ENCODE measurements at regions of chr20 and their contacts with region 1.

Region 1: DNA sequence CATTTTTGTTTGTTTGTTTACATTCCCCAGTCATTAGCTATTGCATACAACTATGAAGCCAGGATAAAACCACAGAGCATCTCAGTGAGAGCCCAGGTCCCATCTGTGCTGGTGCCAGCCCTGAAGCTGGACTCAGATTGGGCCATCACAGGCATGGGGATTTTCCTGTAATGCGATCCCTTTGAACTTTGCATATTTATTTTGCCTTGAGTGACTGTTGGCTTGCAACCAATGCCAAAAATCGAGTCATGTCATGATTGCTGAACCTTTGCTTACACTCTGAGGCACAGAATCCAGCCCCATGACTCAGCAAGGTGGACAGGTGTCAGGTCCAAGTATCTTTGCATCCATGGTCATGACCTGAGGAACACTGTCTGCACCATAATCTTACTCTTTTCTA is 46.2 kb upstream of the GGTLC1 start:
- DNase-seq: no peak
- H3K4me3 Mint-ChIP-seq: no peak overlapping the region
- H3K27ac Mint-ChIP-seq: no peak overlapping the region
- H3K4me1 Mint-ChIP-seq: peaks cover 19% of the 10 kb centered on the region
- H3K27me3 Mint-ChIP-seq: no peaks in the 10 kb centered on the region

Region 2: GRCh38 chr20:23606652-23607049 is 428.2 kb before region 1 on chr20:
- CTCF ChIA-PET with region 1: no interaction called
- intact Hi-C with region 1: no loop called
- DNase-seq: peak; percentile 77
- H3K4me3 Mint-ChIP-seq: no peak overlapping the region
- H3K27ac Mint-ChIP-seq: no peak overlapping the region
- H3K4me1 Mint-ChIP-seq: no peaks in the 10 kb centered on the region
- H3K27me3 Mint-ChIP-seq: peaks cover 6% of the 10 kb centered on the region

Region 3: GRCh38 chr20:24066076-24066700 is 31.4 kb after region 1 on chr20:
- CTCF ChIA-PET with region 1: no interaction called
- intact Hi-C with region 1: loop called (anchors 1 kb)
- DNase-seq: peak; percentile 61
- H3K4me3 Mint-ChIP-seq: peak overlapping the region; percentile 55
- H3K27ac Mint-ChIP-seq: peak overlapping the region; percentile 75
- H3K4me1 Mint-ChIP-seq: peaks cover 13% of the 10 kb centered on the region
- H3K27me3 Mint-ChIP-seq: no peaks in the 10 kb centered on the region